Activated B cell treated with CpG ODN at 0.5 μM for 24 hours (primary cell): ENCODE measurements at regions of chr12 and their contacts with region 1.

Region 1: DNA sequence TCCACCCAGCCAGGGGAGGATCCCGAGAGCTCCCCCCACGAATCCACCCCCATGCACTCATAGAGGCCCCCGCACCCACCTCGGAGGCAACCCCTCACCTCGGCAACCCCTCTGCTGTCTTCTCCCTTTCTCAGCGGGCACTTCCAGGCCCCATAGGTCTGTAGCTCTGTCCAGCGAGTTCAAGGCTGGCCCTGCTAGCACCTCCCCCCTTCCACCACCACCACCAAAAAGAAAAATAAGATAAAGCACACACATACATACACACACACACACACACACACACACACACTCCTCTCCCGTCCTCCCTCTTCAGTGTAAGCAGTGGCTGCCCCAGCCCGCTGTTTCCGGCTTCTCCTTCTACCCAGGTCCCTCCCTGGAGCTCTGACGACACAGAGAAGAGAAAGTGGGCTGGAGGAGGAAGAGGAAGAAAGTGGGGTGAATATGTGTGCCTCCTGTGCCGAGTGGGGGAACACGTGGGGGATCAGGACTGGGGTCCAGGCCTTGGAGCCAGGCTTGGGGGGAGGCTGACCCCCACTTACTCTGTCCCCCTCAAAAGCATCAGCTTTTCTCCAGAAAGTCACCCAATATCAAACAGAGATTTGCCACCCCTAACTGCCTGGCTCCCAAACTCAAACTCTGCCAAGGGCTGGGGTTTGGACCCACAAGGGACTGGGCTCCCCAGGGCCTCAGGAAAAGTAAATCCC is at the start of gene STAT6:
- DNase-seq: peak; percentile 64
- ATAC-seq: peak; percentile 58
- H3K4me3 Mint-ChIP-seq: peak within 1 kb of the TSS; percentile 100
- H3K27ac Mint-ChIP-seq: peak within 1 kb of the TSS; percentile 98
- H3K4me1 Mint-ChIP-seq: peaks cover 46% of the 10 kb centered on the region
- H3K27me3 Mint-ChIP-seq: no peaks in the 10 kb centered on the region
- CTCF ChIP-seq: no peak
- total RNA-seq, gene STAT6: 635 and 745 TPM in 2 replicates

Region 2: GRCh38 chr12:56488041-56488955 is 622.9 kb before region 1 on chr12 and contains the start of gene GLS2:
- CTCF ChIA-PET with region 1: no interaction called
- POLR2A ChIA-PET with region 1: no interaction called
- intact Hi-C with region 1: no loop called
- DNase-seq: peak; percentile 67
- ATAC-seq: peak; percentile 99
- H3K4me3 Mint-ChIP-seq: peak within 1 kb of the TSS; percentile 92
- H3K27ac Mint-ChIP-seq: peak within 1 kb of the TSS; percentile 81
- H3K4me1 Mint-ChIP-seq: peaks cover 17% of the 10 kb centered on the region
- H3K27me3 Mint-ChIP-seq: peaks cover 13% of the 10 kb centered on the region
- CTCF ChIP-seq: no peak
- total RNA-seq, gene GLS2: 2.6 and 3.5 TPM in 2 replicates

Region 3: GRCh38 chr12:56688129-56688845 is 422.9 kb before region 1 on chr12 and contains the start of gene PTGES3:
- CTCF ChIA-PET with region 1: interaction called, 6 read pairs
- POLR2A ChIA-PET with region 1: interaction called, 20 read pairs
- intact Hi-C with region 1: loop called (anchors 1 kb)
- DNase-seq: peak; percentile 97
- ATAC-seq: peak; percentile 75
- H3K4me3 Mint-ChIP-seq: peak within 1 kb of the TSS; percentile 100
- H3K27ac Mint-ChIP-seq: peak within 1 kb of the TSS; percentile 99
- H3K4me1 Mint-ChIP-seq: peaks cover 36% of the 10 kb centered on the region
- H3K27me3 Mint-ChIP-seq: no peaks in the 10 kb centered on the region
- CTCF ChIP-seq: no peak
- total RNA-seq, gene PTGES3: 183 and 185 TPM in 2 replicates

Region 4: GRCh38 chr12:56718149-56718548 is 393.0 kb before region 1 on chr12:
- CTCF ChIA-PET with region 1: no interaction called
- POLR2A ChIA-PET with region 1: no interaction called
- intact Hi-C with region 1: no loop called
- DNase-seq: no peak
- ATAC-seq: no peak
- H3K4me3 Mint-ChIP-seq: no peak overlapping the region
- H3K27ac Mint-ChIP-seq: no peak overlapping the region
- H3K4me1 Mint-ChIP-seq: peaks cover 66% of the 10 kb centered on the region
- H3K27me3 Mint-ChIP-seq: no peaks in the 10 kb centered on the region
- CTCF ChIP-seq: no peak

Region 5: GRCh38 chr12:57005980-57006808 is 105.0 kb before region 1 on chr12 and contains the start of gene ZBTB39:
- CTCF ChIA-PET with region 1: interaction called, 28 read pairs
- POLR2A ChIA-PET with region 1: interaction called, 30 read pairs
- intact Hi-C with region 1: loop called (anchors 1 kb)
- DNase-seq: peak; percentile 81
- ATAC-seq: peak; percentile 93
- H3K4me3 Mint-ChIP-seq: peak within 1 kb of the TSS; percentile 90
- H3K27ac Mint-ChIP-seq: peak within 1 kb of the TSS; percentile 82
- H3K4me1 Mint-ChIP-seq: peaks cover 35% of the 10 kb centered on the region
- H3K27me3 Mint-ChIP-seq: no peaks in the 10 kb centered on the region
- CTCF ChIP-seq: no peak
- total RNA-seq, gene ZBTB39: 12.6 and 13.3 TPM in 2 replicates

Region 6: DNA sequence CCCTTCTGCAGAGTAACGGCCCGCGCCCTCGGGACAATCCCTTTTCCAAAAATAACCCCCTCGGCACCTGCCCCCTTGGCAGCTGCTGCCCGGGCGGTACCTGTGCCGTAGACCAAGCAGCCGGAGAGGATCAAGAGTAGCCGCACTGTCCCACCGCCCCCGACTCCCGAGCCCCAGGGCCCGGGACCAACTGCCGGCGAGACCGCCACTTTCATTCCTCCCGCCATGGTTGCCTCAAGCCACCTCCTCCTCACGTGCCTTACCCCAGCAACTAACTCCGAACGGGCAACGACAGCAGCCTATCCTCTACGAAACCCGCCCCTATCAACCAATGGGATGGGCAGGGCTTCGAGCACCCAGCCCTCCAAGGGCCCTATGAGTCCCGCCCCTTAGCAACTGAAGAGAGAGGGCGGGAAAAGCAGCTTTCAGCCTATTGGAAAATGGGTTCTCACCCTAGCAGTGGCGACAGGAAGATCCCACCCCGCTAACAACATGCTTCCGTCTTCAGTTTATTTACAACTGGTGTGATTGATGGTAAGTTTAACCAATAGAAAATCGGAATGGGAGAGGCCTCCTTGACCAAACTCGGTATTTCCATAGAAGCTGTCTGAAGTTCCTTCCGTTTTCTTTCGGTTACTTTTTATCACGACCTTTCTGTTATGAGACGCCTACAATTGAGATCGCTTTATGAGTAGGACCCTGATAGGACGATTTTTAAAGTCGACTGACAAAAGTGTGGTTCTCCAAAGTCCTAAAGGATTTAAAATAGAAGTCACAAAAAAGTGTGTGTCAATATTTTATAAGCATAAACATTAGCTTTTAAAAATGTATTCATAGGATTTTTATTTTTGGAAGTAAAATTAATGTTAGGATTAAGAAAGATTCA is 32.4 kb before region 1 on chr12 and contains the start of gene NEMP1:
- CTCF ChIA-PET with region 1: interaction called, 42 read pairs
- POLR2A ChIA-PET with region 1: interaction called, 359 read pairs
- intact Hi-C with region 1: no loop called
- DNase-seq: peak; percentile 79
- ATAC-seq: peak; percentile 97
- H3K4me3 Mint-ChIP-seq: peak within 1 kb of the TSS; percentile 96
- H3K27ac Mint-ChIP-seq: peak within 1 kb of the TSS; percentile 93
- H3K4me1 Mint-ChIP-seq: peaks cover 38% of the 10 kb centered on the region
- H3K27me3 Mint-ChIP-seq: no peaks in the 10 kb centered on the region
- CTCF ChIP-seq: no peak
- total RNA-seq, gene NEMP1: 23.0 and 27.6 TPM in 2 replicates

Region 7: DNA sequence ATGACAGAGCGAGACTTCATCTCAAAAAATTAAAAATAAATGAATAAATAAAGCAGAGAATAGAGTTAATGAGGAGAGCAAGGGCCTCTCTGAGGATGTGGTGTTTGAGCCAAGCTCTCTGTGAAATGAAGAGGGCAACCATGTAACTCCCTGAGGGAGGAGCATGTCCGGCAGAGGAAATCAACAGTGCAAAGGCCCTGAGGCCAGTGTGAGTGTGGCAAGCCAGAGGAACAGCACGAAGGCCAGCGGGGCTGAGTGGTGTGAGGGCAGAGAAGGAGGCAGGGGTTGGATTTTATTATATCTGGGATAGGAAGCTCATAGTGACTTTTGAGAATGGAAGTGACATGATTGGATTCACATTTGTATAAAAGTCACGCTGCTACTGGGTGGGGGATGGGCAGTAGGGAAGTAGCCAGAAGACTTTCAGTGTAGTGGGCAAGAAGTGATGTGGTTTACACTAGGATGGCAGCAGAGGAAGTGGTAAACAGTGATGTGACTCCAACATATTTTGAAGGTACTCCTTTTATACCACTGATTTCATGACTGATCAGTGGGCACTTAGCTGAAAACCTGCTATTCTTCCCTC is 46.5 kb after region 1 on chr12:
- CTCF ChIA-PET with region 1: no interaction called
- POLR2A ChIA-PET with region 1: no interaction called
- intact Hi-C with region 1: no loop called
- DNase-seq: no peak
- ATAC-seq: no peak
- H3K4me3 Mint-ChIP-seq: no peak overlapping the region
- H3K27ac Mint-ChIP-seq: no peak overlapping the region
- H3K4me1 Mint-ChIP-seq: peaks cover 9% of the 10 kb centered on the region
- H3K27me3 Mint-ChIP-seq: peaks cover 7% of the 10 kb centered on the region
- CTCF ChIP-seq: no peak

Region 8: DNA sequence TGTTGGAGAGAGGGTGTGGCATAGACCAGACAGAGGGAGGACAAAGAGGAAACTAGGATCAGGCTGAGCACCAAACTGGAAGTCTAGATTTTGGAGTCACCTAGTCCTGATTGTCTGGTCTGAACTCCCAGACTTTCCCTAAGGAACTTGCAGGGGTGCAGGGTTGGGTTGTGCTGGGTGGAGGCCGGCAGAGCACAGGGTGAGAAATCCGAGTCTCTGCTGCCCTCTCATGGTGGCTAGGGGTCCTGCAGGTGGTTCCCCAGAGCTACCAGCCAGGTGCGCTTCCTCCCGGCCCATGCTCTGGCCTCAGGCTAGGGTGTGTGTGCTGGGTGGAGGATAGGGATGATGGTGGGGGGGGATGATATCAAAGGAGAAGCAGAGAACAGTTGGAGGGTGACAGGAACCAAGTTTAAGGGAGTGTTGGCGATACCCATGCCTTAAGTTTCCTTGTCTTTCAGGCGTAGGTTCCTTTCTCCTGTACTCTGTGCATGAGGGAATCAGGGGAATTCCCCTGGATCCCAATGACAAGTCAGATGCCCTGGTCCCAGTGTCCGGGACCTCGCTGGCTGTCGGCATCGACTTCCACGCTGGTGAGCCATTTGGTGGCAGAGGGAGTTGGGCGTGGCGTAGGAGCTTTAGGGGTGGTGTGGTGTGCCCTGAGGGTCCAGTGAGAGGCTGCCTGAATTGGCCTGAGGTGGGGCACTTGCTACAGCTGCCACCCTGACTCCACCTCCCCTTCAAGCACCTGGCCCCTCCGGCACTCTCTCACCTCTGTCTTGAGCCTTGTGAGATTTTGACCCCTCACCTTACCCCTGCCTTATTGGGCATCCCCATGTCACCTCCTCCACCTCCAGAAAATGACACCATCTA is 72.0 kb after region 1 on chr12:
- CTCF ChIA-PET with region 1: interaction called, 17 read pairs
- POLR2A ChIA-PET with region 1: interaction called, 11 read pairs
- intact Hi-C with region 1: no loop called
- DNase-seq: peak; percentile 74
- ATAC-seq: peak; percentile 100
- H3K4me3 Mint-ChIP-seq: no peak overlapping the region
- H3K27ac Mint-ChIP-seq: peak overlapping the region; percentile 6
- H3K4me1 Mint-ChIP-seq: peaks cover 4% of the 10 kb centered on the region
- H3K27me3 Mint-ChIP-seq: peaks cover 1% of the 10 kb centered on the region
- CTCF ChIP-seq: no peak